Activated T-helper 1 cell treated with anti-CD3 and anti-CD28 coated beads, Interleukin-12 subunit alpha, Interleukin-12 subunit beta, Interleukin-2, Interleukin-4 antibody, amounts not matched to agents 30 ng/mL and 10 ng/mL and 1 ng/mL, durations not matched to agents 14 hours and 24 hours and 36 hours (primary cell): ENCODE measurements at regions of chr19 and their contacts with region 1.

Region 1: DNA sequence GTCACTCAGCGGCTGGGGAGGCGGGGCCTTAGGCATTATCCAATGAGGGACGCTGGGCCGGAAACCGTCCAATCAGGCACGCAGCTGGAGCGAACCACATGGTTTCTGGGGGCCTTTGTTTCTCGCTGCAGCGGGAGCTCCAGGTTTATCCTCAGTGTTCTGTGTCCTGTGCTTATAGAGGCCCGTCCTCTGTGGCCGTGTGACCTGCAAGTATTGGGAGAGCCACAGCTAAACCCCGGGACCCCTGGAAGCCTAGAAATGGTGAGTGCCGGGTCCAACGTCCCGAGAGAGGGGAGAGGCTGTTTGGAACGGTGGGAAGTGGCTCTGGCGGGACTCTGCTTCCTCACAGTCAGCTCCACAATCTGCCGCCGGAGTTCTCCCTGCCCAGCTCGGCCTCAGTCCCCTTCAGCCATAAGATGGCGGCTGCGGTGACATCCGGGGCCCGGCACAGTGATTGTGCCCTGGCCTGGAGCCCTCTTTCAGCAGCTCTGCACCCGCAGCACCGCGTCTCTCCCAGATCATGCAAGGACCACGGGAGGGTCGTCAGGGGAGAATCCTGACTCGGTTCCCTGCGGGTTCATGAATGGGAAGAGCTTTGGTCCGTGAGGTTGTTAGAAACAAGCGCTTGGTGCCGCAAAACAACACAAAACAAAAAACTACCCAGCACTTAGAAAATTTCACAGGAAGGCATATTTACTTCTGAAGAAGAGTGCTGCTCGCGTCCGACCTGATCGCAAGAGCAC is at the start of gene ZNF253:
- DNase-seq: peak; percentile 91
- H3K4me3 Mint-ChIP-seq: peak within 1 kb of the TSS; percentile 98
- H3K27ac Mint-ChIP-seq: peak within 1 kb of the TSS; percentile 99
- H3K4me1 Mint-ChIP-seq: peaks cover 18% of the 10 kb centered on the region
- H3K27me3 Mint-ChIP-seq: no peaks in the 10 kb centered on the region
- total RNA-seq, gene ZNF253: 7.8 and 11.1 TPM in 2 replicates

Region 2: GRCh38 chr19:19531951-19532805 is 333.7 kb before region 1 on chr19:
- intact Hi-C with region 1: loop called (anchors 5 kb)
- DNase-seq: peak; percentile 79
- H3K4me3 Mint-ChIP-seq: no peak overlapping the region
- H3K27ac Mint-ChIP-seq: peak overlapping the region; percentile 67
- H3K4me1 Mint-ChIP-seq: peaks cover 7% of the 10 kb centered on the region
- H3K27me3 Mint-ChIP-seq: peaks cover 3% of the 10 kb centered on the region

Region 3: GRCh38 chr19:19732579-19733501 is 133.1 kb before region 1 on chr19 and contains the start of gene ZNF14:
- intact Hi-C with region 1: loop called (anchors 1 kb)
- DNase-seq: peak; percentile 86
- H3K4me3 Mint-ChIP-seq: peak within 1 kb of the TSS; percentile 99
- H3K27ac Mint-ChIP-seq: peak within 1 kb of the TSS; percentile 92
- H3K4me1 Mint-ChIP-seq: peaks cover 17% of the 10 kb centered on the region
- H3K27me3 Mint-ChIP-seq: no peaks in the 10 kb centered on the region
- total RNA-seq, gene ZNF14: 4.3 and 5.1 TPM in 2 replicates

Region 4: GRCh38 chr19:19745496-19746285 is 120.2 kb before region 1 on chr19:
- intact Hi-C with region 1: no loop called
- DNase-seq: no peak
- H3K4me3 Mint-ChIP-seq: no peak overlapping the region
- H3K27ac Mint-ChIP-seq: no peak overlapping the region
- H3K4me1 Mint-ChIP-seq: no peaks in the 10 kb centered on the region
- H3K27me3 Mint-ChIP-seq: no peaks in the 10 kb centered on the region

Region 5: DNA sequence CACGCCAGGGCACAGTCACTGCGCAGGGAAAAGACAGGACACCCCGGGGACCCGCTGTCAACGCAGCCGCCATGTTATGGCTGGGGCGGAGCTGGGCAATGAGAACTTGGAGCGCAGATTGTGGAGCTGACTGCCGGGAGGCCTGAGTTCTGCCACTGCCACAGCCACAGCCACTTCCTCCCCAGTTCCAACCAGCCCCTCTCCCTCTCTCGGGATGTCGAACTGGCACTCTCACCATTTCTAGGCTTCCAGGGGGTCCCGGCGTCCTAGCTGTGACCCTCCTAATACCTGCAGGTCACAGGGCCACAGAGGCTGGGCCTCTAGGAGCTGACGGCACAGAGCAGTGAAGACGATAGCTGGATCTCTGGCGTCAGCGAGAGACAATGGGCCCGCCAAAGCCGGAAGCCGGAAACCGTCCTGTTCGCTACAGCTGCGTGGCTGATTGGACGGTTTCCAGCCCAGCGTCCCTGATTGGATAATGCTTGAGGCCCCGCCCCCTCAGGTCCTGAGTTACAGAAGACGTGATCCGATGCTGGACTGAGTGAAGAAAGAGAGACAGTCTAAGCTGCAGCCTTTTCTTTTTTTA is 44.5 kb before region 1 on chr19 and contains the start of gene ZNF506:
- intact Hi-C with region 1: loop called (anchors 1 kb)
- DNase-seq: peak; percentile 88
- H3K4me3 Mint-ChIP-seq: peak within 1 kb of the TSS; percentile 98
- H3K27ac Mint-ChIP-seq: peak within 1 kb of the TSS; percentile 97
- H3K4me1 Mint-ChIP-seq: peaks cover 10% of the 10 kb centered on the region
- H3K27me3 Mint-ChIP-seq: no peaks in the 10 kb centered on the region
- total RNA-seq, gene ZNF506: 13.5 and 15.7 TPM in 2 replicates

Region 6: DNA sequence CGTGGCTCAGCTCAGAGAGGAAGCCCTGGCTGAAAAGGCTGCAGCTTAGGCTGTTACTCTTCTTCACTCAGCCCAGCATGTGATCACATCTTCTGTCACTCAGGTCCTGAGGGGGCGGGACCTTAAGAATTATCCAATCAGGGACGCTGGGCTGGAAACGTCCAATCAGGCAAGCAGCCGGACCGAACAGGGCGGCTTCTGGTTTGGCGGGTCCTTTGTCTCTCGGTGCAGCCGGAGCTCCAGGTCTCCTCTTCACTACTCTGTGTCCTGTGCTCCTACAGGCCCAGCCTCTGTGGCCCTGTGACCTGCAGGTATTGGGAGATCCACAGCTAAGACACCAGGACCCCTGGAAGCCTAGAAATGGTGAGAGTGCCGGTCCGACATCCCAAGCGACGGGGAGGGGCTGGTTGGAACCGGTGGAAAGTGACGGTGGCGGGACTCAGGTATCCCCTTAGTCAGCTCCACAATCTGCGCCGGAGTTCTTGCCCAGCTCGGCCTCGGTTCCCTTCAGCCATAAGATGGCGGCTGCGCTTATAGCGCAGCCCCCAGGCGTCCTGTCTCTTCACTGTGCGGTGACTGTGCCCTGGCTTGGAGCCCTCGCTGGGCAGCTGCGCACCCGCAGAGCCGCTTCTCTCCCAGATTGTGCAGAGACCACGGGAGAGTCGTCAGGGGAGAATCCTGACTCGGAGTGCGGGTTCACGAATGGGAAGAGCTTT is 35.0 kb after region 1 on chr19 and contains the start of gene ZNF93:
- intact Hi-C with region 1: loop called (anchors 1 kb)
- DNase-seq: peak; percentile 85
- H3K4me3 Mint-ChIP-seq: peak within 1 kb of the TSS; percentile 95
- H3K27ac Mint-ChIP-seq: peak within 1 kb of the TSS; percentile 90
- H3K4me1 Mint-ChIP-seq: peaks cover 16% of the 10 kb centered on the region
- H3K27me3 Mint-ChIP-seq: no peaks in the 10 kb centered on the region
- total RNA-seq, gene ZNF93: 6.8 and 7.2 TPM in 2 replicates